ENCODE measurements at regions of chr9 and their contacts with region 1.

Region 1: DNA sequence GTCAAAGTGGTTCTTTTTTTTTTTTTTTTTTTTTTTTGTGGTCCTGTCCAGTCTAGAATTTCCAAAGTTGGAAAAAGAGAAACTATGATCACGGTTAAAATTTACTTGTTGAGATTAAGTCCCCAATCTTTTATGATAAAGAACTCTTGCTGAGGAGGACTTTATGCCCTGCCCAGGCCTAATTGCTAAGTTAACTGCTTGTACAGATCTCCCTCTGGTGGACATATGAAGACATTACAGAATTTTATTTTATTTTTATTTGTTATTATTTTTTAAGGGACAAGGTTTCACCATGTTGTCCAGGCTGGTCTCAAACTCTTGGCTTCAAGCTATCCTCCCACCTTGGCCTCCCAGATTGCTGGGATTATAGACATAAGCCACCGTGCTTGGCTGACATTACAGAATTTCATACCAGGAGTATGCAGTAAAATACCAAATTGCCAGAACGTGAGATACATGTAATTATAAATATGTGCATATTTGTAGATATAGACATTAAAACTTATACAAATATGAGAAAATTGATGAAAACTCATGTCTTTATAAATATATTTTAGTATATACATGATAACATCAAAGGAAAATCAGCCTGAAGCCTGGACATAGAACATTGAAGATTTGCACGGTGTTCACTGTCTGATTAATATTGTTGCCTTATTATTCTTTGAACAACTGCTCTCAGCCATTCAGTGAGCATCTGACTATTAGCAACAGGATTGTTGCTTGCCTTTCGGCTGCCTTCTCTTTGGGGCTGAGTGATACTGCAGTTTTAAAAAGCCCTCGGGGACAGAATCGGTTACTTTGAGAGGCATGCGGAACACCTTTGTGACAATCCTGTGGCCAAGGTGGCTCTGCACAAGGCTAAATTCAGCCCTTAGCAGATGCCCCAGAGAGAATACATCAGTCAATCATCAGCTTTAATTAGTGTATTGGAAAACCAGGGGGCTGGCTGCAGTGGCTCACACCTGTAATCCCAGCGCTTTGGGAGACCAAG is 91.0 kb downstream of the RFK start:
- DNase-seq: peak in 1 of 2 donors; percentile 76
- H3K4me3 ChIP-seq: no peak overlapping the region
- H3K27ac ChIP-seq: no peak overlapping the region
- H3K4me1 ChIP-seq: peaks cover 0 to 5% (median 2%) of the 10 kb centered on the region in 4 donors
- H3K27me3 ChIP-seq: no peaks in the 10 kb centered on the region
- CTCF ChIP-seq: peak in 5 of 7 experiments; percentile 25 to 70 (median 62)
- EP300 ChIP-seq: no peak
- POLR2A ChIP-seq: no peak

Region 2: DNA sequence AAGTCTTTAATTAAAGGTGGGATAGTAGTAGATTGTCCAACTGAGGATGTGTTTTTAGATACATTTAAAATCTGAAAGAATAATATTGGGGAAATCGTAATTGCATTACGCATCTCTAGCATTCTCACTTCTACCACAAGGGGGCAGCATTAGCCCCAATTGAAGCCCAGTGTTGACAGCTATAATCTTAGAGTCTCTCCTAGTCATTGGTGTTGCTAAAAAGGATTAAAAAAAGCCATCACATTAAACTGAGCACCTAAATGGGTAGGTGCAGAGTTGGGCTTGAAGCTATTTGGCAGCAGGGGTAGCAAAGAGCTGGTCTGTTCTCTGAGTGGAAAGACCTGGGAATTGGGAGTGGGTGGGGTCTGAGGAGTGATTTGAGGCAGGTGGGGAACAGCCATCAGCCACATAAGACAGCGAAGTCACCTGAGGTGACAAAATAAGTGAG is 1037.7 kb before region 1 on chr9:
- intact Hi-C with region 1: loop called (anchors 10 kb)
- DNase-seq: peak; percentile 38 to 74
- H3K4me3 ChIP-seq: no peak overlapping the region
- H3K27ac ChIP-seq: no peak overlapping the region
- H3K4me1 ChIP-seq: peaks cover 0 to 3% (median 0%) of the 10 kb centered on the region in 4 donors
- H3K27me3 ChIP-seq: no peaks in the 10 kb centered on the region
- CTCF ChIP-seq: peak in 5 of 7 experiments; percentile 50 to 91 (median 67)
- EP300 ChIP-seq: no peak
- POLR2A ChIP-seq: no peak

Region 3: GRCh38 chr9:75378036-75378435 is 925.2 kb before region 1 on chr9:
- intact Hi-C with region 1: no loop called
- DNase-seq: peak in 1 of 2 donors; percentile 19
- H3K4me3 ChIP-seq: no peak overlapping the region
- H3K27ac ChIP-seq: no peak overlapping the region
- H3K4me1 ChIP-seq: no peaks in the 10 kb centered on the region
- H3K27me3 ChIP-seq: no peaks in the 10 kb centered on the region
- CTCF ChIP-seq: no peak
- EP300 ChIP-seq: no peak
- POLR2A ChIP-seq: no peak

Region 4: GRCh38 chr9:76216161-76216649 is 87.0 kb before region 1 on chr9:
- intact Hi-C with region 1: no loop called
- DNase-seq: no peak
- H3K4me3 ChIP-seq: no peak overlapping the region
- H3K27ac ChIP-seq: peak overlapping the region in 3 of 5 donors; percentile 37 to 44 (median 41)
- H3K4me1 ChIP-seq: peaks cover 0 to 2% (median 0%) of the 10 kb centered on the region in 4 donors
- H3K27me3 ChIP-seq: no peaks in the 10 kb centered on the region
- CTCF ChIP-seq: no peak
- EP300 ChIP-seq: no peak
- POLR2A ChIP-seq: no peak